K562 (cell line): ENCODE measurements at regions of chr3 and their contacts with region 1.

Region 1: DNA sequence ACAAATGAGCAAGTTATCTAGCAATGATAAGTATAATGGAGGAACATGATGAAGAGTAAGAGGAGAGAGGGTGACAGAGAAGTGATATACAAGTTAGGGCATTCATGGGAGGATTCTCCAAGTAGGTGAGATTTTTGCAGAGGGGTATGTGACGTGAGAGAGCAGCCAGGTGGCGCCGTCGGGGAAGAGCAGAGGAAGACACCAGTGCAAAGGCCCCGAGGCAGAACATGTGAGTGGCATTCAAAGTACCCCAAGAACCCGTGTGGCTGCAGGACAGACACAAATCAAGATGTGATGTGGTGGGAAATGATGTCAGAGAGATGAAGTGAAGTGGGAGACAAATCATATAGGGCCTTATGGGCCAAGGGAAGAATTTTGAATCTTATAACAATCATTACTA is 81.8 kb upstream of the GRM7 start:
- DNase-seq: peak in 2 of 4 experiments; percentile 18 to 32
- ATAC-seq: peak; percentile 89
- H3K4me3 ChIP-seq: no peak overlapping the region
- H3K27ac ChIP-seq: no peak overlapping the region
- H3K4me1 ChIP-seq: no peaks in the 10 kb centered on the region
- H3K27me3 ChIP-seq: no peaks in the 10 kb centered on the region
- CTCF ChIP-seq: peak; percentile 27 to 44 (median 41); a peak in 5 of 6 replicates
- EP300 ChIP-seq: no peak
- POLR2A ChIP-seq: no peak
- RAD21 ChIP-seq: peak in 1 of 2 experiments; percentile 27; a peak in 1 of 4 replicates

Region 2: DNA sequence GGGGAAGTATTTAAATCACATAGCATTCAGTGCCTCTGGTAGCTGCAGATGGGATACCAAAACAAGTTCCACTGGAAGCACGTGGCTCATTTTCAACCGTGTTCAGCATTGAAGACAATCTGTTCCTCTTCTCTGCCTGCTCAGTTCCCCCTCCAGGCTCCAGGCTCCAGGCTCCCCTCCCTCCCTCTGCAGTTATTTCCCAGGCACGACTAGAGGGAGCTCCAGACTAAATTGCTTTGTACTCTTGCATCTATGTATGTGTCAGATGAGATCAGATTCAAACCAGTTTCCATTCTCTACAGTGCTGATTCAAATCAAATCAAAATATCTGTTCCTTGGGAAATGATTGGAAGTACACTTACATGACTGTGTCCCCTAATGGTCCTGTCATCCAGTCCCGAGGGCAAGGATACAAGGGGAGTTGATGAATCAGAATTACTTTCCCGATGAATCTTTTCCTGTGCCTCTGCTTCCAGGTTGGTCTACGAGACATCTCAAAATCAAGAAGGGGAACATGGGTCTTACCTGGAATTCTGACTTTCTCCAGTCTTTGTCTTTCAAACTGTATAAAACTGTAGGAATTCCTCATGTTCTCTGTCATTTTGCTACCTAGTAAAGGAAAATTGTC is 991.2 kb before region 1 on chr3:
- CTCF ChIA-PET with region 1: no interaction called
- POLR2A ChIA-PET with region 1: no interaction called
- in situ Hi-C with region 1: no loop called
- intact Hi-C with region 1: loop called (anchors 10 kb)
- DNase-seq: peak in 2 of 4 experiments; percentile 26 to 30
- ATAC-seq: peak; percentile 83
- H3K4me3 ChIP-seq: no peak overlapping the region
- H3K27ac ChIP-seq: no peak overlapping the region
- H3K4me1 ChIP-seq: no peaks in the 10 kb centered on the region
- H3K27me3 ChIP-seq: no peaks in the 10 kb centered on the region
- CTCF ChIP-seq: peak; percentile 30 to 51 (median 48); a peak in 5 of 6 replicates
- EP300 ChIP-seq: no peak
- POLR2A ChIP-seq: no peak
- RAD21 ChIP-seq: peak; percentile 39 to 52

Region 3: DNA sequence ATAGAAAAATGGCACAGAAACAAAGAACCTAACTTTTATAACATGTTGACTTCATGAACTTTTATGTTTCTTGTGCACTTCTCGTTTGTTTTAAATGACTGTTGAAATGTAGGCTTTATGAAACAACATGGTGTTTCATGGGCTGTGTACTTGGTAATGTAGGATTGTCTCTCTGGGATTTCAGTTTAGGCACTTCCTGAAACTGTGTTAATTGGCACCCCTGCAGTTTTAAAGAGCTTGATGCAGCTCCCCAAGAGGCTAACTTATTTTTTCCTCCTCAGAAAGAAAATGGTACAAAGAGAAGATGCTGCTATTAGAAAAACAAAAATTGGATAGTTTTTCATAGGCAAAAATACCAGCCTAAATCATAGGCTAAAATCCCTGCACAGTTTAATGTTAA is 321.0 kb after region 1 on chr3:
- CTCF ChIA-PET with region 1: no interaction called
- POLR2A ChIA-PET with region 1: no interaction called
- in situ Hi-C with region 1: no loop called
- intact Hi-C with region 1: no loop called
- DNase-seq: no peak
- ATAC-seq: no peak
- H3K4me3 ChIP-seq: no peak overlapping the region
- H3K27ac ChIP-seq: no peak overlapping the region
- H3K4me1 ChIP-seq: no peaks in the 10 kb centered on the region
- H3K27me3 ChIP-seq: no peaks in the 10 kb centered on the region
- CTCF ChIP-seq: no peak
- EP300 ChIP-seq: no peak
- POLR2A ChIP-seq: no peak
- RAD21 ChIP-seq: no peak